Activated T-helper 2 cell treated with anti-CD3 and anti-CD28 coated beads, Interferon-gamma antibody, Interleukin-2, Interleukin-4, amounts not matched to agents 10 μg/mL and 5 μg/mL and 100 μg/mL, durations not matched to agents 14 hours and 24 hours and 36 hours (primary cell): ENCODE measurements at regions of chr12 and their contacts with region 1.

Region 1: DNA sequence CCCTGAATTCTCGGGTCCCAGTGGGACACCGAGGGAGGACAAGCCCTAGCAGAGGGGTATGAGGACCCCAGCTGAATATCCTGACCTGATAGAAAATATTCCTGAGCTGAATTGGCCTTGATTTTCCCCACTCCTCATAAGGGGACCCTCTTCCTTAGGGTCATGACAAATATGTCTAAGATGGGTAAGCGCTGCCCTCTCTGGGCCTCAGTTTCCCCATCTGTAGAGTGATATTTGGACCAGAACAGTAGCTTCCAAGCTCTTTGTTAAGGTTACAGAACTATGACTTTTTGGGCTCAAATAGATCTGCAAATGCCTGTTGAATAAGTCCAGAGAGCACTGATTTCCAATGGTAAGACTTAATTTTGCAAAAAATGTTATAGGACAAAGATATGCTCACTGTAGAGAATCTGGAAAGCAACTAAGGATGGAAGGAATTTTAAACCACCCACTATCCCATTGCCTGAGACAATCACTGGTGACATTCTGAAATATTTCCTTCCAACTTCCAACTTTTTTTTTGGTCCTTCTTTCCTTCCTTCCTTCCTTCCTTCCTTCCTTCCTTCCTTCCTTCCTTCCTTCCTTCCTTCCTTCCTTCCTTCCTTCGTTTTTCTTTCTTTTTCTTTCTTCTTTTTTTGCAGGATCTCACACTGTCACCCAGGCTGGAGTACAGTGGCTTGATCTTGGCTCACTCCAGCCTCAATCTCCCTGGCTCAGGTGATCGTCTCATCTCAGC is 32.0 kb downstream of the MYL2 start:
- DNase-seq: no peak
- H3K4me3 Mint-ChIP-seq: no peak overlapping the region
- H3K27ac Mint-ChIP-seq: no peak overlapping the region
- H3K4me1 Mint-ChIP-seq: peaks cover 4% of the 10 kb centered on the region
- H3K27me3 Mint-ChIP-seq: peaks cover 8% of the 10 kb centered on the region

Region 2: GRCh38 chr12:110639336-110640141 is 248.9 kb before region 1 on chr12:
- intact Hi-C with region 1: loop called (anchors 5 kb)
- DNase-seq: no peak
- H3K4me3 Mint-ChIP-seq: no peak overlapping the region
- H3K27ac Mint-ChIP-seq: no peak overlapping the region
- H3K4me1 Mint-ChIP-seq: peaks cover 32% of the 10 kb centered on the region
- H3K27me3 Mint-ChIP-seq: no peaks in the 10 kb centered on the region

Region 3: GRCh38 chr12:110853836-110854235 is 34.6 kb before region 1 on chr12:
- intact Hi-C with region 1: loop called (anchors 5 kb)
- DNase-seq: no peak
- H3K4me3 Mint-ChIP-seq: no peak overlapping the region
- H3K27ac Mint-ChIP-seq: no peak overlapping the region
- H3K4me1 Mint-ChIP-seq: no peaks in the 10 kb centered on the region
- H3K27me3 Mint-ChIP-seq: peaks cover 5% of the 10 kb centered on the region